Caco-2 (cell line): ENCODE measurements at regions of chr4 and their contacts with region 1.

Region 1: GRCh38 chr4:113153529-113154101 is 104.2 kb downstream of the ANK2 start:
- DNase-seq: peak; percentile 37 to 58
- H3K4me3 ChIP-seq: no peak overlapping the region
- H3K4me3 Mint-ChIP-seq: no peak overlapping the region
- H3K27ac Mint-ChIP-seq: no peak overlapping the region
- H3K4me1 ChIP-seq: peaks cover 18% of the 10 kb centered on the region
- H3K4me1 Mint-ChIP-seq: peaks cover 8% of the 10 kb centered on the region
- H3K27me3 ChIP-seq: no peaks in the 10 kb centered on the region
- H3K27me3 Mint-ChIP-seq: no peaks in the 10 kb centered on the region
- CTCF ChIP-seq: peak in 1 of 2 experiments; percentile 19

Region 2: DNA sequence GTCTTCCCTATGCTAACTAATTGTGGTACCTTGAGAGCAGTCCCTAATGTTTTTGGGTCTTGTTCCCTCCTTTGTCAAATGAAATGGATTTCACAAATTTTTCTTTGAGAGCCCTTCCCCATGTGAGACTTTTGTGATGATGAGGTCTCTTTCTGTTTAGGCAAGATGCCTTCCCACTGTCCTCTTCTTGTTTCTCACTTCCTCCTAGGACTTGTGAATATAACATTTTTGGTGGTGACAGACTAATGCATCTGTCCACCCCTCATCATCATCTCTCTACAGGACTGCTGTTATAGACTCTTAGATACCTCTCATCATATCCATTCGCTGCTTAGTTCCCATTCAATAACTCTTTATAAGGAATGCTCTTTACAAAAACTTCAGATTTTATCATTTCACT is 112.8 kb before region 1 on chr4:
- CTCF ChIA-PET with region 1: no interaction called
- POLR2A ChIA-PET with region 1: no interaction called
- intact Hi-C with region 1: no loop called
- DNase-seq: no peak
- H3K4me3 ChIP-seq: no peak overlapping the region
- H3K4me3 Mint-ChIP-seq: no peak overlapping the region
- H3K27ac Mint-ChIP-seq: peak overlapping the region; percentile 70
- H3K4me1 ChIP-seq: peaks cover 52% of the 10 kb centered on the region
- H3K4me1 Mint-ChIP-seq: peaks cover 33% of the 10 kb centered on the region
- H3K27me3 ChIP-seq: no peaks in the 10 kb centered on the region
- H3K27me3 Mint-ChIP-seq: no peaks in the 10 kb centered on the region
- CTCF ChIP-seq: no peak

Region 3: GRCh38 chr4:113116414-113117357 is 36.9 kb before region 1 on chr4:
- CTCF ChIA-PET with region 1: no interaction called
- POLR2A ChIA-PET with region 1: no interaction called
- intact Hi-C with region 1: no loop called
- DNase-seq: peak; percentile 55 to 63
- H3K4me3 ChIP-seq: peak overlapping the region; percentile 42
- H3K4me3 Mint-ChIP-seq: peak overlapping the region; percentile 83
- H3K27ac Mint-ChIP-seq: peak overlapping the region; percentile 3
- H3K4me1 ChIP-seq: 0 out of 2 replicates have a peak, but pooled peaks cover 5% of the 10 kb centered on the region
- H3K4me1 Mint-ChIP-seq: peaks cover 6% of the 10 kb centered on the region
- H3K27me3 ChIP-seq: no peaks in the 10 kb centered on the region
- H3K27me3 Mint-ChIP-seq: no peaks in the 10 kb centered on the region
- CTCF ChIP-seq: no peak

Region 4: DNA sequence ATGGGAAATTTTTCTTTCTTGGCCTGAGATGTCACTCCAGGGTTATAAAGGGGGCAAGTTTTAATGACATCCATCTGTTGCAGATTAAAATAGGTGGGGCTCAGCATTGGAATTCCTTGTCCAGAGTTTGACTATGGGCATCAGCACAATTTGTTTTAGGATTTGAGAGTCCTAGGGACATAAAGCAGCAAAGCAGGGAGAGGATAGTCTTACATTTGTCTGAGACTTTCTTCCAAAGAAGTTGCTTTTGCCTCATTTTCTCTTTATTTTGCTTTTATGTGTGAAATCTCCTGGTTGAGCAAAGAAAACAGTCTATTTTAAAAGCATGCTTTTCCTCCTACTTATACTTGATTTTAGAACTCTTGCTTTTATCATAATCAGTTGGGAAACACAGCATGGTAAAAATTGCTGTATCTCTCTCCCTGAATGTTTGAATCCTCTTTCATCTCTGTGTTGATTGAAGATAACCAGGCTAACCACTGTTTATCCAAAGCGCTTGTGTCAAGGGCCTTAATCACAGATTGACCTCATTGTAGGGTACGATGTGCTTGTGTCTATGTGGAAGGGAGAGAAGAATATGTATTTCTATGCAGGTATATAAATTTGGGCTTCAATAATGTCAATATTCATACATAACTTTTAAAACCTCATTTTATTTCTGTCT is 17.3 kb after region 1 on chr4:
- CTCF ChIA-PET with region 1: no interaction called
- POLR2A ChIA-PET with region 1: no interaction called
- intact Hi-C with region 1: loop called (anchors 1 kb)
- DNase-seq: peak; percentile 38 to 54
- H3K4me3 ChIP-seq: no peak overlapping the region
- H3K4me3 Mint-ChIP-seq: peak overlapping the region; percentile 38
- H3K27ac Mint-ChIP-seq: peak overlapping the region; percentile 56
- H3K4me1 ChIP-seq: peaks cover 42% of the 10 kb centered on the region
- H3K4me1 Mint-ChIP-seq: peaks cover 39% of the 10 kb centered on the region
- H3K27me3 ChIP-seq: no peaks in the 10 kb centered on the region
- H3K27me3 Mint-ChIP-seq: no peaks in the 10 kb centered on the region
- CTCF ChIP-seq: no peak

Region 5: DNA sequence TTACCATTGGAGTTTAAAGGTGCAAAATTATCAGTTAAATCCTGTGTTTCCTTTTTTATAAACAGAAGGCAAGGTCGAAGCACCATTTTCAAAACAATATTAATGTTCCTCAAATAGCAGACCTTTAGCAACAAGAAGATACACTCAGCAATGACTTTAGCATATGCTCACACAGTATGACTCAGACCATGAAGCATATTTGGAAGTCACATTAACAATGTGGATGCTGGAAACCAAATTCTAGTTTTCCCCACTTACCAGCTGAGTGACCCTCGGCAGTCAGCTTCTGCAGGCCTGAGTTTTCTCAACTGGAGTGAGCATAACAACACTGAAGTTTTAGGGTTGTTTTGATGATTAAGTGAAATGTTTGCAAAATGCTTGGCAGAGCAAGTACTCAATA is 26.4 kb after region 1 on chr4:
- CTCF ChIA-PET with region 1: no interaction called
- POLR2A ChIA-PET with region 1: no interaction called
- intact Hi-C with region 1: loop called (anchors 1 kb)
- DNase-seq: no peak
- H3K4me3 ChIP-seq: no peak overlapping the region
- H3K4me3 Mint-ChIP-seq: no peak overlapping the region
- H3K27ac Mint-ChIP-seq: no peak overlapping the region
- H3K4me1 ChIP-seq: peaks cover 41% of the 10 kb centered on the region
- H3K4me1 Mint-ChIP-seq: peaks cover 7% of the 10 kb centered on the region
- H3K27me3 ChIP-seq: no peaks in the 10 kb centered on the region
- H3K27me3 Mint-ChIP-seq: no peaks in the 10 kb centered on the region
- CTCF ChIP-seq: no peak